ENCODE measurements at regions of chr11 and their contacts with region 1.

Region 1: DNA sequence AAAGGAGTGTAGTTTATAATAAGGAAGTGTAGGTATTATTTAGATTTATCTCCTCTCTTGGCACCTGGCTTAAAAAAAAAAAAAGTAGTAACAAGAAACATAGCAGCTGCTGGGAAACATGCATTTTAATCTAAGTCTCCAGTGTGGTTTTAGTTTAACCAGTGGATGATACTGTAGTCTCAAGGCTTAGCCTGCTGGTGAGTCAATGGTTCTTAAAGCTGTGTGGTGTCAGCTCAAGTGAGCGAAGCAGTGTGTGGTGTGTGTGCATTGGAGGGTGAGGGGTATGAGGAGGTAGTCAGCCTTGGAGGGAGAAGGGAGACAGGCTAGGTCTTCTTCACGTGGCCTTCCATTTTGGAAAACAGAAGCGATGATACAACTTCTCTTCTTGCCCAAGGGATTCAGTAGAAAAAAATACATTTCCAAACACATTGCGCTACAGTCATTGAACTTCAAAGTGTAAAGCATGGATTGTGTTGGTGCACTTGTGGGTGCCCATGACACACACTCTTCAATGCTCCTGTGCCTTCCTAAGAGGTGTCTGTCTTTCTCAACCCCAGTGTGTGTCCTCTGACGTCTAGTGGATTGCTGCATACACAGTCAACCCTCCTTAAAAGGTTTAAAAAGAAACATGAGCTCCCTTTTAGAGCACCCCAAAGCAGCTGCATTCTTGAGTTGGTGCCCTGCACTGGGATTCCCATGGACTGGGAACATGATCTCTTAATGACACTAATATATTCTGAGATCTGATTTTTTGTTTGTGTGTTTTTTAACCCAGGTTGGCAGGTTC is 40.1 kb downstream of the ZBTB16 start:
- DNase-seq: peak; percentile 43 to 72 (median 64)
- ATAC-seq: peak; percentile 80
- H3K4me3 ChIP-seq: no peak overlapping the region
- H3K27ac ChIP-seq: peak overlapping the region; percentile 86 to 91 (median 88)
- H3K4me1 ChIP-seq: peaks cover 96% of the 10 kb centered on the region
- H3K27me3 ChIP-seq: no peaks in the 10 kb centered on the region
- CTCF ChIP-seq: peak in 3 of 7 experiments; percentile 14 to 29 (median 16)
- POLR2A ChIP-seq: peak in 2 of 3 donors; percentile 30 to 47

Region 2: DNA sequence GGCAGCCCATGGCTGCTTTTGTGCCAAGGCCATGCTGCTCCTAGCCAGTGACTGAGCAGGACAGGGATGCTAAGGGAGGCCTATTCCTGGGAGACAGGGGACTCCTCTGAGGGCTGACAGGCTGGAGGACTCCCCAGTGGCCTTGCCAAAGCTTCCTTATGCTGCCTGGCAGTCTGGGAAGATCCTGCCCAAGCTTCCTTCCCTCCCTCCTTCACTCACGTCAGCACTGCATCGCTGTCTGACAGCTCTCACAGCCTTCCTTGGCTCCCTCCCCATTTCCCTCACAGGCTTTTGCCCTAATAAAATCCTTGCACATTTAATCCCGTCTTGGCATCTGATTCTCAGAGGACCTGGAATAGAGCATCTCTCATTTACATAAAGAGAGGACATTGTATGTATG is 98.2 kb before region 1 on chr11:
- intact Hi-C with region 1: no loop called
- DNase-seq: no peak
- ATAC-seq: no peak
- H3K4me3 ChIP-seq: no peak overlapping the region
- H3K27ac ChIP-seq: no peak overlapping the region
- H3K4me1 ChIP-seq: no peaks in the 10 kb centered on the region
- H3K27me3 ChIP-seq: no peaks in the 10 kb centered on the region
- CTCF ChIP-seq: no peak
- POLR2A ChIP-seq: no peak

Region 3: GRCh38 chr11:114060392-114061350 is 38.9 kb before region 1 on chr11:
- intact Hi-C with region 1: loop called (anchors 5 kb)
- DNase-seq: peak in 3 of 4 donors; percentile 49 to 58 (median 54)
- ATAC-seq: peak; percentile 19
- H3K4me3 ChIP-seq: peak overlapping the region; percentile 95 to 98
- H3K27ac ChIP-seq: peak overlapping the region; percentile 84 to 100 (median 96)
- H3K4me1 ChIP-seq: peaks cover 63% of the 10 kb centered on the region
- H3K27me3 ChIP-seq: no peaks in the 10 kb centered on the region
- CTCF ChIP-seq: peak in 1 of 7 experiments; percentile 15
- POLR2A ChIP-seq: peak; percentile 33 to 40 (median 40)

Measured in body of pancreas (tissue), 4 donors.